Heart right ventricle (tissue), 16 donors: ENCODE measurements at regions of chr11 and their contacts with region 1.

Region 1: DNA sequence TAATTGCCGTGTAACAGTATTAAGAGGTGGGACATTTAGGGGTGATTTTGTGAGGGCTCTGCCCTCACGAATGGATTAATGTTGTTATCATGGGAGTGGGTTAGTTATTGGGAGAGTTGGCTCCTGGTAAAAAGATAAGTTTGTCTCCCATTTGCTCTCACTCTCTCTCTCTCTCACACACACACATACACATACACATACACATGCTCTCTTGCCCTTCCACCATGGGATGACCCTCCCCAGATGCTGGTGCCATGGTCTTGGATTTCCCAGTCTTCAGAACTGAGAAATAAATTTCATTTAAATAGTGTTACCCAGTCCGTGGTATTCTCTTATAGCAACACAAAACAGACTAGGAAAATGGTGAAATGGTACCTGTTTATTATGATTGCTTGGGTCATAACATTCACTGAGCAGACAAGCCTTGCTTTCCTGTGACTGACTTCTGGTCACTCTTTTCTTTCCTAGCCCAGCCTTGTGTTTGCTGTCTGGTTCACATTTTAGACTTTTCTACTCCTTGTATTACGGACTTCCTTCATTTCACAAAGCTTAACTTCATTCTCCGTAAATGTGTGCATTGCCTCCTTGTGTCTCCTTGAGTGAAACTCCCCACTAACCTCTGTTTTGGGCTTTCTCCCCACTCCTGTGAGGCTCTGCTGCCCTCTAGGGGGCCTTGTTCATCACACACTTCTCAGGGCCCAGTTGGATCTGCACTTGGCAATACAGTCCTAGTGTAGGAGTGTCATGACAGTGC is 206.5 kb upstream of the CTSC start:
- DNase-seq: peak; percentile 62 to 78
- ATAC-seq: peak; percentile 78 to 99 (median 95)
- H3K4me3 ChIP-seq: no peak overlapping the region
- H3K27ac ChIP-seq: peak overlapping the region in 1 of 10 donors; percentile 40
- H3K4me1 ChIP-seq: peaks cover 0 to 7% (median 0%) of the 10 kb centered on the region in 9 donors
- H3K27me3 ChIP-seq: peaks cover 0 to 4% (median 0%) of the 10 kb centered on the region in 7 donors
- CTCF ChIP-seq: peak; percentile 61 to 94 (median 85)

Region 2: GRCh38 chr11:87352759-87353707 is 1191.0 kb before region 1 on chr11:
- intact Hi-C with region 1: loop called in 2 of 10 experiments (anchors 10 kb)
- DNase-seq: peak; percentile 77 to 89
- ATAC-seq: peak; percentile 80 to 96 (median 94)
- H3K4me3 ChIP-seq: no peak overlapping the region
- H3K27ac ChIP-seq: peak overlapping the region in 5 of 10 donors; percentile 7 to 62 (median 31)
- H3K4me1 ChIP-seq: peaks cover 0 to 48% (median 23%) of the 10 kb centered on the region in 9 donors
- H3K27me3 ChIP-seq: no peaks in the 10 kb centered on the region
- CTCF ChIP-seq: peak; percentile 97 to 100 (median 99)

Region 3: DNA sequence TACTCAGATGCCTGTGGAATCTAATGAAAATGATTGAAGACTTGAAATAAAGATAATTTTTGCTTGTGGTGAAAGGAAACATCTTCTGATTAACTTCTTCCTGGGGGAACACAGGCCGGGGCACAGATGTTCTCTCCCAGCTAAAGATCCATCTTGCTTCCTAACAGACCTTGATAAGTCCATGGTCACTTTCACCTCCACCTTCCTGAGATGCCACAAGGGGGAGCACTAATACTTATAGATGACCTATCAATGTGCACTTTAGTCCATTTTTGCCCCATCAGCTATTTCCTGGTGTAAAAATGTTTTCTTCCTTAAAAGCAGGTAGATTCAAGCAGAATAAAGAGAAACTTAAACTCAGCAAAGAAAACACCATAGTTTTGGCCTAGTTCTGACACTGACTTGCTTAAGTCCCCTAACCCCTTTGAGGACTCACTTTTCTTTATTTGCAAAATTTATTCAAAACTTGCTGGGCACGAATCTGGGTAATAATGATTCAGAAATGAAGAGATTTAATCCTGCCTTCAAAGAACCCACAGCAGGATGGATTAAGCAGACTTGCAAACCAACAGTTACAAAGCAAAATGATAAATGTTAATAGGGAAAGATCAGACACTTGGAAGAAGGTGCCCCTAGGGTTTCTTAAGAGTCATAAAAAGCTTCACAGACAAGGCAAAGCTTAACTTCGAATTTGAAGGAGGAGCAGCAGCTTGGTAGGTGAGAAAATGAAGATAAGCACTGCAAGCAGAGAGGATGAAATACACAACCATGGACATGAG is 527.5 kb before region 1 on chr11:
- intact Hi-C with region 1: loop called in 2 of 10 experiments (anchors 1 kb)
- DNase-seq: peak in 1 of 2 donors; percentile 66
- ATAC-seq: peak in 6 of 8 donors; percentile 55 to 74 (median 60)
- H3K4me3 ChIP-seq: no peak overlapping the region
- H3K27ac ChIP-seq: no peak overlapping the region
- H3K4me1 ChIP-seq: no peaks in the 10 kb centered on the region
- H3K27me3 ChIP-seq: peaks cover 0 to 12% (median 0%) of the 10 kb centered on the region in 7 donors
- CTCF ChIP-seq: peak; percentile 30 to 83 (median 72)

Region 4: GRCh38 chr11:88103337-88104206 is 440.5 kb before region 1 on chr11:
- intact Hi-C with region 1: loop called in 3 of 10 experiments (anchors 5 to 10 kb)
- DNase-seq: peak in 1 of 2 donors; percentile 5
- ATAC-seq: no peak
- H3K4me3 ChIP-seq: no peak overlapping the region
- H3K27ac ChIP-seq: no peak overlapping the region
- H3K4me1 ChIP-seq: no peaks in the 10 kb centered on the region
- H3K27me3 ChIP-seq: no peaks in the 10 kb centered on the region
- CTCF ChIP-seq: peak in 6 of 9 donors; percentile 17 to 57 (median 30)

Region 5: GRCh38 chr11:88231894-88232482 is 312.1 kb before region 1 on chr11:
- intact Hi-C with region 1: loop called in 7 of 10 experiments (anchors 5 to 10 kb)
- DNase-seq: no peak
- ATAC-seq: peak in 1 of 8 donors; percentile 55
- H3K4me3 ChIP-seq: no peak overlapping the region
- H3K27ac ChIP-seq: no peak overlapping the region
- H3K4me1 ChIP-seq: no peaks in the 10 kb centered on the region
- H3K27me3 ChIP-seq: no peaks in the 10 kb centered on the region
- CTCF ChIP-seq: peak in 8 of 9 donors; percentile 18 to 60 (median 51)

Region 6: GRCh38 chr11:88779577-88779976 is 235.5 kb after region 1 on chr11:
- intact Hi-C with region 1: no loop called
- DNase-seq: no peak
- ATAC-seq: no peak
- H3K4me3 ChIP-seq: no peak overlapping the region
- H3K27ac ChIP-seq: no peak overlapping the region
- H3K4me1 ChIP-seq: no peaks in the 10 kb centered on the region
- H3K27me3 ChIP-seq: no peaks in the 10 kb centered on the region
- CTCF ChIP-seq: no peak